ENCODE measurements at regions of chr17 and their contacts with region 1.

Region 1: GRCh38 chr17:74987418-74987908 is at the start of gene CDR2L:
- H3K4me3 ChIP-seq: peak within 1 kb of the TSS; percentile 81
- H3K27ac ChIP-seq: peak within 1 kb of the TSS; percentile 88; the same call in 1 of the 2 replicates
- H3K4me1 ChIP-seq: peaks cover 3% of the 10 kb centered on the region; the same call in 1 of the 2 replicates
- CTCF ChIP-seq: no peak

Region 2: GRCh38 chr17:74972107-74972972 is 15.1 kb before region 1 on chr17 and contains the start of gene HID1:
- CTCF ChIA-PET with region 1: interaction called, 7 read pairs
- POLR2A ChIA-PET with region 1: interaction called, 50 read pairs
- H3K4me3 ChIP-seq: peak within 1 kb of the TSS; percentile 74
- H3K27ac ChIP-seq: peak within 1 kb of the TSS; percentile 60; the same call in 1 of the 2 replicates
- H3K4me1 ChIP-seq: peaks cover 4% of the 10 kb centered on the region; the same call in 1 of the 2 replicates
- CTCF ChIP-seq: no peak; the same call in 1 of the 2 replicates

Measured in HEK293 (cell line).